GM12878 (cell line): ENCODE measurements at regions of chr6 and their contacts with region 1.

Region 1: DNA sequence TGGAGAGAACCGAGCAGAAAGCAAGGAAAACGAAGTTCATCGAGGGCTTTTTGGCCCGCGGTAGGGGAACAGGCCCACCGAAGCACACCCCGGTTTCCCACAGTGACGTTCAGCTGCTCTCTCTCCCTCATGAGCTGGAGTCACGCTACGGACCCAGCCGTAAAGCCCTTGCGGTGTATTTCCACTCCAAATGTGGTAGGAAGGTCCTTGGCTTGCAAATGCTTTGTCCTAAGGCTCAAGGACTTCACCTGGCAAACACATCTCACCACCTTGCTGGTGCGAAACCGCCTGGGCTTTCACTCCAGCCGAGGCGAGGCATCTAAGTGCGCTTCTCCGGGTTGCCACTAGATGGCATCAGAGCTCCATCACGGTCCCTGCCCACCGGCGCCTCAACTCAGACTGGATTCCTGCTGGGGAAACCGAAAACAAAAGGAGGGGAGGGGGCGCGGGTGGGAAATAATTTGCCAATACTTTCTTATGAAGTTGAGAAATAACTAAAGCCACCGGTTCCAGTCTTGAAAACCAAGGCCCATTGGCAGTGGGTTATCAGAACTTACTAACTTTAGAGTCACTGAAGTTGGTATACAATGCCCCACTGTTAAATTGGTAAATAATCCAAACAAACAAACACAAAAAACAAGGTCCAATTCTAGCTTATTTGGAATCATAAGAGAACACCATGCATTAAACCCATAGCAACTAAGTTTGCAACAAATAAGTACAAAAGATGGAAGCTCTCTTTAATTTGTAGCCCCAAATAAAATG is 13.4 kb upstream of the FOXC1 start:
- DNase-seq: no peak
- ATAC-seq: peak; percentile 96
- H3K4me3 ChIP-seq: no peak overlapping the region
- H3K27ac ChIP-seq: no peak overlapping the region
- H3K4me1 ChIP-seq: no peaks in the 10 kb centered on the region
- H3K27me3 ChIP-seq: no peaks in the 10 kb centered on the region; a peak in 2 of 4 replicates
- CTCF ChIP-seq: peak; percentile 92 to 93 (median 93)
- EP300 ChIP-seq: no peak
- POLR2A ChIP-seq: no peak
- RAD21 ChIP-seq: peak; percentile 90

Region 2: GRCh38 chr6:1575210-1576041 is 20.8 kb before region 1 on chr6:
- CTCF ChIA-PET with region 1: interaction called, 10 read pairs
- POLR2A ChIA-PET with region 1: interaction called, 3 read pairs
- RAD21 ChIA-PET with region 1: interaction called, 3 read pairs
- SMC1A ChIA-PET with region 1: interaction called, 5 read pairs
- in situ Hi-C with region 1: no loop called
- intact Hi-C with region 1: no loop called
- DNase-seq: peak; percentile 67
- ATAC-seq: peak; percentile 75
- H3K4me3 ChIP-seq: no peak overlapping the region
- H3K27ac ChIP-seq: no peak overlapping the region
- H3K4me1 ChIP-seq: peaks cover 22% of the 10 kb centered on the region
- H3K27me3 ChIP-seq: peaks cover 0 to 2% of the 10 kb centered on the region in 2 experiments; a peak in 1 of 4 replicates
- CTCF ChIP-seq: no peak
- EP300 ChIP-seq: peak; percentile 17 to 60; a peak in 1 of 4 replicates
- POLR2A ChIP-seq: no peak
- RAD21 ChIP-seq: no peak

Region 3: GRCh38 chr6:1738558-1739081 is 142.3 kb after region 1 on chr6:
- CTCF ChIA-PET with region 1: no interaction called
- POLR2A ChIA-PET with region 1: no interaction called
- RAD21 ChIA-PET with region 1: no interaction called
- SMC1A ChIA-PET with region 1: no interaction called
- in situ Hi-C with region 1: no loop called
- intact Hi-C with region 1: no loop called
- DNase-seq: no peak
- ATAC-seq: no peak
- H3K4me3 ChIP-seq: no peak overlapping the region
- H3K27ac ChIP-seq: peak overlapping the region; percentile 63
- H3K4me1 ChIP-seq: peaks cover 31% of the 10 kb centered on the region
- H3K27me3 ChIP-seq: no peaks in the 10 kb centered on the region
- CTCF ChIP-seq: no peak
- EP300 ChIP-seq: no peak
- POLR2A ChIP-seq: no peak
- RAD21 ChIP-seq: no peak

Region 4: DNA sequence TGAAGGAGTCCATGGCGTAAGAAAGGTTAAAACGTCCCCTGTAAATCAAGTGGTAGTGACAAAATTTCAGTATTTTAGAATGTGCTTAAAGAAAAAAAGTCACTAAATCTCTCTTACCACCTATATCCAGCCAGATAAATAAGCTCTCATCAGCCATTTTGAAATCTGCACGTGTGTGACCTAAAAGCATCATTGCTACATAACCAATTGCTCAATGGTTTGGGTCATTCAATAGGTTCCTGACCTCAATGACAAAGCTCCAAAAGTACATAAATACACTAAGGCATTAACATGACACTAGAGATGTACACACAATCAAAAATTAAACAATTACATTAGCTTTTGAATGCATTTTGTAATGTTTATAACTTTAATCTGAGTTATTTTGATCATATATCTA is 376.7 kb after region 1 on chr6:
- CTCF ChIA-PET with region 1: no interaction called
- POLR2A ChIA-PET with region 1: no interaction called
- RAD21 ChIA-PET with region 1: no interaction called
- SMC1A ChIA-PET with region 1: no interaction called
- in situ Hi-C with region 1: no loop called
- intact Hi-C with region 1: no loop called
- DNase-seq: no peak
- ATAC-seq: no peak
- H3K4me3 ChIP-seq: no peak overlapping the region
- H3K27ac ChIP-seq: no peak overlapping the region
- H3K4me1 ChIP-seq: no peaks in the 10 kb centered on the region
- H3K27me3 ChIP-seq: no peaks in the 10 kb centered on the region
- CTCF ChIP-seq: no peak
- EP300 ChIP-seq: no peak
- POLR2A ChIP-seq: no peak
- RAD21 ChIP-seq: no peak

Region 5: DNA sequence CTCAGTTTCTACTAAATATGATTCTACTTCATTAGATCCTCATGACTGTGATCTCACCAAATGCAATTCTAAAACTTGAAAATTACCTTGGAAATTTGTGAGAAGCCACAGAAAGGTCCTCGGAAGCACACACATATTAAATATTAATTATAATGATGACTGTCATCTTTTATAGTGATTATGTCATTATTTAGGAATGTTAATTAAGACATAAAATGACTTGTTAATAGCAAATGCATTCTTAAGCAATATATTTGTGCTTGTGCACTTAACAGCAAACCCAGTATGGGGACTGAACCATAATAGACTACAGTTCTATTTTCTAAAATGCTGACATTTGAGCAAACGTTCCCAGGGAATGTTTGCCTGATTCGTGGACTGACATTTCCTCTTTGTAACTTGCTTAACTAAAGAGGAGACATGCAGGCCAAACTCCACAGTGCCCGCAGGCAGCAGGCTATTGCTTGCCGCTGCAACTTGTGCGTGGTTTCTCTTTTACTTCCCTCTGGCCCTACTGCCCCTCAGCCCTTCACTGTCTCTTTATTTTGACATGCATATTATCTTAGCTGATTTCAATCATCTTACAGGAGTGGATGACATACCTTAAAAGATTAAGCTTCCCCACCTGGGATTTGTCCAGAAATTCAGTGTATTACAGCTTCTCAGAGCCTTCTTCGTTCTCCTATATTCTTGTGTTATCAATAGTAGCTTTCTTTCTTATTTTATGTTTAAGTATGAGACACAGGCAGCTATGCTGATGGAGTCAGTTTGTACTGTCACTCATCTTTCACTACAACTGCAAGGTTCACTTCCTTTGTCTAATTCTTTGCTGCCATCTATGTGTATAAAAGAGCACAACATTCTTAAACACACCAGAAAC is 507.6 kb after region 1 on chr6:
- CTCF ChIA-PET with region 1: interaction called, 25 read pairs
- POLR2A ChIA-PET with region 1: no interaction called
- RAD21 ChIA-PET with region 1: interaction called, 8 read pairs
- SMC1A ChIA-PET with region 1: interaction called, 6 read pairs
- in situ Hi-C with region 1: loop called (anchors 5 kb)
- intact Hi-C with region 1: no loop called
- DNase-seq: peak; percentile 11
- ATAC-seq: peak; percentile 84
- H3K4me3 ChIP-seq: no peak overlapping the region
- H3K27ac ChIP-seq: no peak overlapping the region
- H3K4me1 ChIP-seq: no peaks in the 10 kb centered on the region
- H3K27me3 ChIP-seq: no peaks in the 10 kb centered on the region
- CTCF ChIP-seq: peak; percentile 43 to 76 (median 56); a peak in 5 of 6 replicates
- EP300 ChIP-seq: no peak
- POLR2A ChIP-seq: no peak
- RAD21 ChIP-seq: peak; percentile 94

Region 6: GRCh38 chr6:2209226-2209809 is 613.0 kb after region 1 on chr6:
- CTCF ChIA-PET with region 1: interaction called, 33 read pairs
- POLR2A ChIA-PET with region 1: no interaction called
- RAD21 ChIA-PET with region 1: interaction called, 4 read pairs
- SMC1A ChIA-PET with region 1: interaction called, 3 read pairs
- in situ Hi-C with region 1: no loop called
- intact Hi-C with region 1: no loop called
- DNase-seq: peak; percentile 15
- ATAC-seq: peak; percentile 99
- H3K4me3 ChIP-seq: no peak overlapping the region
- H3K27ac ChIP-seq: no peak overlapping the region
- H3K4me1 ChIP-seq: no peaks in the 10 kb centered on the region
- H3K27me3 ChIP-seq: no peaks in the 10 kb centered on the region
- CTCF ChIP-seq: peak; percentile 63 to 89 (median 73)
- EP300 ChIP-seq: no peak
- POLR2A ChIP-seq: no peak
- RAD21 ChIP-seq: peak; percentile 66

Region 7: DNA sequence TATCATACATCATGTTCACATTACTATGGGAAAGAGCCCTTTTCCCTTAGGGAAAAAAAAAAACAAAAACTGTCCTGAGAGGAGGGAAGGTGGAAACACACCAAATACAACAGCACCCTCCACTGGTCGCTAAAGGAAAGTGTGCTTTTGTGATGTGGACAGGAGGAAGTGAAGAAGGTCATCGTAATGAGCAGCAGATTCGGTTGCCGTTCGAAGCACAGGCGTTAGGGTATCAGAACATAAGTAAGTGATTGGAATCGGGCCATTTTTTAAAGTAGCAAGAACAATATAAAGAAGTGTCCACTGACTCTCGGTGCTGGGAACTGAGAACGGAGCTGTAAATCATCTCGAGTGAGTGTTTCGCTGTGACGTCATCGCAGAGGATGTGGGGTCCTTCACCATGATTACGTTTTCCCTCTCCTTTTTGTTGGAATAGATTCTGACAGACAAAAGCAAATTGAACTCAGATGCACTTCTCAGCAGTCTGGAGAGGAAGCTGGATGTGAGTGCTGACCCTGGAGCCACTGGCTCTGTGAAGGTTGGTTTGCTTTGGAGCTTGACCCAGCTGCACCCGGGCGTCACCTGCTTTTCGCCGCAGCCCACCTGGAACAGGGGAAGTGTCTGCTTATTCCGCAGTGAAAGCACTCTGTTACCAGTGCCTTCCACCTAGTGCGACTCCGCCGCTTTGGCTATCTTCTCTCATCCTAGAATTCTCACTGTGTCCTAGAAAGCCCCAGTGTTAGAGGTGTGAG is 852.7 kb after region 1 on chr6:
- CTCF ChIA-PET with region 1: interaction called, 4 read pairs
- POLR2A ChIA-PET with region 1: no interaction called
- RAD21 ChIA-PET with region 1: no interaction called
- SMC1A ChIA-PET with region 1: interaction called, 3 read pairs
- in situ Hi-C with region 1: no loop called
- intact Hi-C with region 1: loop called (anchors 10 kb)
- DNase-seq: no peak
- ATAC-seq: peak; percentile 47; the same call in 2 of the 3 replicates
- H3K4me3 ChIP-seq: no peak overlapping the region
- H3K27ac ChIP-seq: no peak overlapping the region
- H3K4me1 ChIP-seq: no peaks in the 10 kb centered on the region
- H3K27me3 ChIP-seq: no peaks in the 10 kb centered on the region; a peak in 2 of 4 replicates
- CTCF ChIP-seq: peak; percentile 54 to 69 (median 54); a peak in 5 of 6 replicates
- EP300 ChIP-seq: no peak
- POLR2A ChIP-seq: no peak
- RAD21 ChIP-seq: peak; percentile 68

Region 8: GRCh38 chr6:2749969-2750600 is 1153.8 kb after region 1 on chr6:
- CTCF ChIA-PET with region 1: interaction called, 6 read pairs
- POLR2A ChIA-PET with region 1: no interaction called
- RAD21 ChIA-PET with region 1: interaction called, 8 read pairs
- SMC1A ChIA-PET with region 1: interaction called, 6 read pairs
- in situ Hi-C with region 1: loop called (anchors 10 kb)
- intact Hi-C with region 1: loop called (anchors 1 kb)
- DNase-seq: no peak
- ATAC-seq: peak; percentile 63
- H3K4me3 ChIP-seq: no peak overlapping the region
- H3K27ac ChIP-seq: no peak overlapping the region
- H3K4me1 ChIP-seq: no peaks in the 10 kb centered on the region
- H3K27me3 ChIP-seq: peaks cover 4 to 7% of the 10 kb centered on the region in 2 experiments; a peak in 3 of 4 replicates
- CTCF ChIP-seq: peak; percentile 68 to 75 (median 69)
- EP300 ChIP-seq: no peak
- POLR2A ChIP-seq: no peak
- RAD21 ChIP-seq: peak; percentile 50; the same call in 1 of the 2 replicates